A673 (cell line): ENCODE measurements at regions of chr11 and their contacts with region 1.

Region 1: GRCh38 chr11:103622296-103622695 is 414.1 kb upstream of the DDI1 start:
- DNase-seq: no peak
- H3K4me3 ChIP-seq: no peak overlapping the region
- H3K27ac ChIP-seq: no peak overlapping the region
- H3K4me1 ChIP-seq: no peaks in the 10 kb centered on the region
- H3K27me3 ChIP-seq: peaks cover 7% of the 10 kb centered on the region
- CTCF ChIP-seq: no peak

Region 2: DNA sequence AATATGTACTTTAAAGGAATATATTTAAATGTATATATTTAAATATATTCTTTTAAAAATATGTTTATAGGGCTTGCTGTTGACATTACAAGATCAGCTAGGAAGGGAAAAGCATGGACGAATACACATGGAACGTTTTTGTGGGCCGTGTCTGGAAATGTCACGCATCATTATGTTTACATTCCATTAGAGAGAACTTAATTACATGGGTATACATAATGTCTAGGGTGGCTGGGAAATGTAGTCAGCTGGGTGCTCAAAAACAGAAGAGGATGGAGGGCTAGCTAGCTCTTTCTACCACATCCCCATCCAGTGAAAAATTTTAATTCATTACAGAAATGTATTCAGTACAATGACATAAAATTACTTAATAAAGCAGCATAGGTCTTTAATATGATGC is 141.9 kb before region 1 on chr11:
- CTCF ChIA-PET with region 1: no interaction called
- POLR2A ChIA-PET with region 1: no interaction called
- intact Hi-C with region 1: no loop called
- DNase-seq: peak; percentile 37
- H3K4me3 ChIP-seq: no peak overlapping the region
- H3K27ac ChIP-seq: no peak overlapping the region
- H3K4me1 ChIP-seq: no peaks in the 10 kb centered on the region
- H3K27me3 ChIP-seq: no peaks in the 10 kb centered on the region
- CTCF ChIP-seq: no peak

Region 3: DNA sequence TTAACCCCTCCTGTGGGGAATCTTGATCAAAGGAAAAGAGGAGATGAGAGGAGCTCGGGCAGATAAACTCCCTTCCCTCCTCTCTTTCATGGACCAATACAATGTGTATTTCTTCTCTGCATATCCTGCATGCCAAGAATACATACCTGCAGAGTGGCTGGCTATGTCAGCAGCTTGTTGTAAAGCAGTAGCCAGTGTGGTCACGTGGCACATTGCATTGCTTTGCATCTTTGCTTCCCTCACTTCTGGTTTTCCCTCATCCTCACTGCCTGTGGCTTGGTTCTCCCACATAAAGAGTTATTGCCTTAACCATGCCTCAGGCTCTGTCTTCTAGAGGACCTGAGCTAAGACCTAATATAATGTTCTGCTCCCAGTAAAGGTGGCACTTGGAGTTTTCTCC is 47.7 kb after region 1 on chr11:
- CTCF ChIA-PET with region 1: no interaction called
- POLR2A ChIA-PET with region 1: no interaction called
- intact Hi-C with region 1: loop called (anchors 1 kb)
- DNase-seq: no peak
- H3K4me3 ChIP-seq: no peak overlapping the region
- H3K27ac ChIP-seq: no peak overlapping the region
- H3K4me1 ChIP-seq: no peaks in the 10 kb centered on the region
- H3K27me3 ChIP-seq: no peaks in the 10 kb centered on the region
- CTCF ChIP-seq: no peak